Endothelial cell of umbilical vein (primary cell): ENCODE measurements at regions of chr14 and their contacts with region 1.

Region 1: GRCh38 chr14:101964297-101965144 is at the start of gene DYNC1H1:
- DNase-seq: peak; percentile 96
- H3K4me3 ChIP-seq: peak within 1 kb of the TSS; percentile 75 to 95 (median 90)
- H3K27ac ChIP-seq: peak within 1 kb of the TSS; percentile 64
- H3K4me1 ChIP-seq: peaks cover 14% of the 10 kb centered on the region
- H3K27me3 ChIP-seq: no peaks in the 10 kb centered on the region
- CTCF ChIP-seq: no peak
- POLR2A ChIP-seq: peak; percentile 93
- total RNA-seq, gene DYNC1H1: 596 and 648 TPM in 2 replicates

Region 2: GRCh38 chr14:101665515-101666078 is 298.9 kb before region 1 on chr14:
- CTCF ChIA-PET with region 1: no interaction called
- POLR2A ChIA-PET with region 1: no interaction called
- dilution Hi-C with region 1: no loop called
- intact Hi-C with region 1: no loop called
- DNase-seq: peak; percentile 37
- H3K4me3 ChIP-seq: no peak overlapping the region
- H3K27ac ChIP-seq: no peak overlapping the region
- H3K4me1 ChIP-seq: no peaks in the 10 kb centered on the region
- H3K27me3 ChIP-seq: peaks cover 7 to 31% of the 10 kb centered on the region in 2 experiments
- CTCF ChIP-seq: peak; percentile 18 to 41
- POLR2A ChIP-seq: no peak

Region 3: DNA sequence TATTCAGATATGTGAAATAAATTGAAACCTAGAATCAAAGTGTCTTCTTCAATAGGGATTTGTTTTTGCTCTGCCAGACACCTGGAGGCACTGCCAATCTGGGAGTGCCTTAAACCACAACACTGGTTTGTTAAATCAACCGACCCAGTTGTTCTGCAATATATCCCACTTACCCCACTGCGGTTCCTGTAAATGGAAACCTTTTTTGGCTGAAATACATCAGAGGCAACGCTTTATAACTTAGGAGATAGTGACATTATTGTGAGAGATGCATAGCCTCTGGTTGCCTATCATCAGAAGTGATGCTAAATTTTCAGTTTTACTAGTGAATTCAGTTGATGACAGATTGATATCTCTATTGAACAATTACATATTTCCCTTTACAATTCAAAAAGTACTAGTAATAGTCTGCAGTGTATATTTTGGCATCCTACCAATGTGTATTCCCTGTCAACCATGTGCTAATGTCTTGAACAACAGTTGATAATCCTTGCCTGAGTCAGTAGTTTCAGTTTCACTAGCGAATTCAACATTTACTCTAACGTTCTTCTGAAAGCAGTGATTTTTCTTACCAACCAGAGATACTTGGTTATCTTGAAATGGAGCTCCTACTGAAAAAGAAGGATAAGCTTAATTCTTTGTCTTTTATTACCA is 172.5 kb before region 1 on chr14:
- CTCF ChIA-PET with region 1: no interaction called
- POLR2A ChIA-PET with region 1: no interaction called
- dilution Hi-C with region 1: no loop called
- intact Hi-C with region 1: no loop called
- DNase-seq: peak; percentile 63
- H3K4me3 ChIP-seq: peak overlapping the region in 2 of 3 experiments; percentile 32 to 63
- H3K27ac ChIP-seq: no peak overlapping the region
- H3K4me1 ChIP-seq: peaks cover 4% of the 10 kb centered on the region
- H3K27me3 ChIP-seq: peaks cover 3 to 8% of the 10 kb centered on the region in 2 experiments
- CTCF ChIP-seq: no peak
- POLR2A ChIP-seq: no peak

Region 4: GRCh38 chr14:101980251-101981099 is 16.0 kb after region 1 on chr14:
- CTCF ChIA-PET with region 1: interaction called, 3 read pairs
- POLR2A ChIA-PET with region 1: no interaction called
- dilution Hi-C with region 1: no loop called
- intact Hi-C with region 1: loop called (anchors 1 kb)
- DNase-seq: peak; percentile 90
- H3K4me3 ChIP-seq: no peak overlapping the region
- H3K27ac ChIP-seq: no peak overlapping the region
- H3K4me1 ChIP-seq: peaks cover 8% of the 10 kb centered on the region
- H3K27me3 ChIP-seq: no peaks in the 10 kb centered on the region
- CTCF ChIP-seq: no peak
- POLR2A ChIP-seq: no peak

Region 5: GRCh38 chr14:102020058-102020971 is 55.8 kb after region 1 on chr14:
- CTCF ChIA-PET with region 1: no interaction called
- POLR2A ChIA-PET with region 1: no interaction called
- dilution Hi-C with region 1: no loop called
- intact Hi-C with region 1: no loop called
- DNase-seq: no peak
- H3K4me3 ChIP-seq: no peak overlapping the region
- H3K27ac ChIP-seq: no peak overlapping the region
- H3K4me1 ChIP-seq: no peaks in the 10 kb centered on the region
- H3K27me3 ChIP-seq: no peaks in the 10 kb centered on the region
- CTCF ChIP-seq: no peak
- POLR2A ChIP-seq: no peak

Region 6: GRCh38 chr14:102096214-102097114 is 131.9 kb after region 1 on chr14:
- CTCF ChIA-PET with region 1: interaction called, 5 read pairs
- POLR2A ChIA-PET with region 1: no interaction called
- dilution Hi-C with region 1: no loop called
- intact Hi-C with region 1: loop called (anchors 1 kb)
- DNase-seq: peak; percentile 79
- H3K4me3 ChIP-seq: no peak overlapping the region
- H3K27ac ChIP-seq: no peak overlapping the region
- H3K4me1 ChIP-seq: no peaks in the 10 kb centered on the region
- H3K27me3 ChIP-seq: no peaks in the 10 kb centered on the region
- CTCF ChIP-seq: peak; percentile 81 to 88
- POLR2A ChIP-seq: no peak

Region 7: GRCh38 chr14:102139248-102140026 is 174.9 kb after region 1 on chr14 and contains the start of gene WDR20:
- CTCF ChIA-PET with region 1: no interaction called
- POLR2A ChIA-PET with region 1: no interaction called
- dilution Hi-C with region 1: no loop called
- intact Hi-C with region 1: loop called (anchors 1 kb)
- DNase-seq: peak; percentile 97
- H3K4me3 ChIP-seq: peak within 1 kb of the TSS; percentile 57 to 79 (median 72)
- H3K27ac ChIP-seq: peak within 1 kb of the TSS; percentile 19
- H3K4me1 ChIP-seq: peaks cover 17% of the 10 kb centered on the region
- H3K27me3 ChIP-seq: no peaks in the 10 kb centered on the region
- CTCF ChIP-seq: no peak
- POLR2A ChIP-seq: peak; percentile 77
- total RNA-seq, gene WDR20: 22.4 and 23.6 TPM in 2 replicates